Right ventricle myocardium inferior (tissue), 1 donor: ENCODE measurements at regions of chr14 and their contacts with region 1.

Region 1: DNA sequence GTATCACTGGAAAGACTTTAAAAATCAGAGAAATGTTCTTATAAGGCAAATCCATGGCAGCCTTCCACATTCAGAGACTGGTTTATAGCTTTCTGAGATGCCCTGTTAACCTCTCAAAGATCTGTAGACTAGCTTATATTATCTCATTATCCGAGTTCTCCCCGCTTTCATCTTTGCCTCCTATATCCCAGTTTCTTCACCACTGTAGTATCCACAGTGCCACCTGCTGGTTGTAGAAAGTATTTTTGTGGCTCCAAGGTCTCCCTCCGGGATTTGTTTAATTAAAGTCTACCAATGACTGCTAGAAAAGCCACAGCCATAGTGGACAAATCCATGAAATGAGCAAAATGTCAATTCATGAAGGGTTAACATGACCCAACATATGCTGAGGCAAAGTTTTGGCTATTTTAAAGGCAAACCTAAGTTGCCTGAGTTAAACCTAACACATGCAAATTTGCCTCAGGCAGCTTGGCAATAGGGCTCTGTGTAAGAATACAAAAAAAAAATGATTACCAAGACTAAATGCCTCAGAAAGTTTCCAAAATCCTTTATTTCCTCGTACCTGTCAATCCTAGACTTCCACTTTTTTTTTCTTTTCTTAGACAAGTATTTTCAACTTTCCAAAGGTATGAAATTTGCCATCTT is 218.8 kb upstream of the BMP4 start:
- DNase-seq: no peak
- ATAC-seq: peak; percentile 32

Region 2: GRCh38 chr14:53432378-53432802 is 743.0 kb before region 1 on chr14:
- intact Hi-C with region 1: loop called (anchors 10 kb)
- DNase-seq: no peak
- ATAC-seq: no peak

Region 3: GRCh38 chr14:54347997-54348611 is 172.7 kb after region 1 on chr14:
- intact Hi-C with region 1: loop called (anchors 10 kb)
- DNase-seq: no peak
- ATAC-seq: peak; percentile 48